ENCODE measurements at regions of chr7 and their contacts with region 1.

Region 1: DNA sequence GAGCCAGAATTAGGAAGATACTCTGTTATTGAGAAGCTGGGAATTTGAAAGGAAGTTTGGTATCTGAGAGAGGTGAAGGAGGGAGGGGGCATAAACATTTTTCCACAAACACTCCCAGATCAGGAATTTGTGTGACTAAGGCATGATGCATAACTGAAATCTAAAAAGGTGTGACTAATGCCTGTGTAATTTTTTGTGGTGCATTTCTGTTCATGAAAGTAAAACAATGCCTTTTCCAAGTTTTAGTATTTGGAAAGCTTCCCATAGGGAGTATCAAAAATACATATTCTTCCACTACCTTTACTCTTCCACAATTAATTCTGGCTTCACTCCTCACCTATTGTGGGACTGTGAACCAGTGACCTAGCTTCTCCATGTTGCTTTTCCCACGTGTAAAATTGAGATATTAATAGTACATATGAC is 56.4 kb upstream of the CAV2 start:
- DNase-seq: peak; percentile 98
- ATAC-seq: peak; percentile 73
- H3K4me3 ChIP-seq: no peak overlapping the region
- H3K27ac ChIP-seq: peak overlapping the region; percentile 91
- H3K4me1 ChIP-seq: peaks cover 57% of the 10 kb centered on the region
- H3K27me3 ChIP-seq: no peaks in the 10 kb centered on the region
- CTCF ChIP-seq: no peak

Region 2: DNA sequence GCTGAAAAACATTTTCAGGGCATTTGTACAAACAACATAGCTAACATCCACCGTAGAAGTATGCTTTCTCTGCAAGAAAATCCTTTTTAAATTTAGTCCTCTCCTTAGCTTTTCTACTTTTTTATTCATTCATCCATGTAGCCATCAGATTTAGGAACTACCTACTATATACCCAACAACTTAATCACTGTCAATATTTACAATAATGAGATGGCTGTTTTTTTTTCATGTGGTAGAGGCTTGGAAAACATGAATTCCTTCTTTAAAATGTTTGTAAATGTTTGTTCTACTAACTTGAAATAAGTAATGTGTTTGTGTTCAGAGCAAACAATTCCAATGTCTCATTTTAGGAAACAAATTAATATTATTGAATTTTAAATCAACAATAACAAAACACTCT is 21.8 kb before region 1 on chr7:
- CTCF ChIA-PET with region 1: no interaction called
- POLR2A ChIA-PET with region 1: interaction called, 4 read pairs
- intact Hi-C with region 1: loop called (anchors 1 kb)
- DNase-seq: peak; percentile 55
- ATAC-seq: peak; percentile 66
- H3K4me3 ChIP-seq: no peak overlapping the region
- H3K27ac ChIP-seq: peak overlapping the region; percentile 36; the same call in 1 of the 2 replicates
- H3K4me1 ChIP-seq: peaks cover 32% of the 10 kb centered on the region
- H3K27me3 ChIP-seq: no peaks in the 10 kb centered on the region
- CTCF ChIP-seq: no peak

Region 3: GRCh38 chr7:116499168-116500077 is 56.3 kb after region 1 on chr7 and contains the start of gene CAV2:
- CTCF ChIA-PET with region 1: no interaction called
- POLR2A ChIA-PET with region 1: interaction called, 4 read pairs
- intact Hi-C with region 1: loop called (anchors 2 kb)
- DNase-seq: peak; percentile 92
- ATAC-seq: peak; percentile 79
- H3K4me3 ChIP-seq: peak within 1 kb of the TSS; percentile 89
- H3K27ac ChIP-seq: peak within 1 kb of the TSS; percentile 79
- H3K4me1 ChIP-seq: peaks cover 37% of the 10 kb centered on the region
- H3K27me3 ChIP-seq: no peaks in the 10 kb centered on the region
- CTCF ChIP-seq: no peak
- total RNA-seq, gene CAV2: 76.6 and 84.4 TPM in 2 replicates

Region 4: DNA sequence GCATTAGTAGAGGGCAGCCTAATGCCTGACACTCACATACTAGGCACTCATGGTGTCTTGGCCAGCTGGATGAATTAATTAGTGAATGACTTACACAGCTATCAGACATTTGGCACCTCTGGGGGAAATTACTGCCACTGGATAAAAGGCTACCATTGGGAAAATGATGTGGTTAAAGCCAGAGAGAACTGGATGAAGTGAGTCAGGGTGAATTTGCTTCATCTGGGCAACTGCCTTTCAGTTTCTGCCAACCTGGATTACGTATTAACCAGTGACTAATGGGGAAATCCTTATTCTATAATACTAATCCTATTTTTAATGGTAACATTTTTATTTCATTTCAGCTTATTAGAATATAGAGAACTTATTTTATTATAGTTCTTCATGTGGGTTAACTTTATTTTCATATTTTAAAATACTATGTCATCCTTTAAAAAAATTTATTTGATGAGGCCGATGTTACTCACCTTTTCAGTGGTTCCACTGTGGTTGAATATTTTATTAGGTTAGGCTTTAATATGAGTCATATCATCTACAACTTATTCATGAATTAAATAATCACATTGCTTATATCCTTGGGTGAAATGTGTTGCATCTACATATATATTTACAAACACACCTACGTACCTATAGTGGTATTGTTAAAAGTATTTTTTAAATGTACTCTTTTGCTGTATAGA is 333.6 kb after region 1 on chr7:
- CTCF ChIA-PET with region 1: no interaction called
- POLR2A ChIA-PET with region 1: no interaction called
- intact Hi-C with region 1: loop called (anchors 10 kb)
- DNase-seq: peak; percentile 91
- ATAC-seq: peak; percentile 55
- H3K4me3 ChIP-seq: peak overlapping the region; percentile 53
- H3K27ac ChIP-seq: peak overlapping the region; percentile 99
- H3K4me1 ChIP-seq: peaks cover 85% of the 10 kb centered on the region
- H3K27me3 ChIP-seq: no peaks in the 10 kb centered on the region
- CTCF ChIP-seq: no peak